ENCODE measurements at regions of chr9 and their contacts with region 1.

Region 1: DNA sequence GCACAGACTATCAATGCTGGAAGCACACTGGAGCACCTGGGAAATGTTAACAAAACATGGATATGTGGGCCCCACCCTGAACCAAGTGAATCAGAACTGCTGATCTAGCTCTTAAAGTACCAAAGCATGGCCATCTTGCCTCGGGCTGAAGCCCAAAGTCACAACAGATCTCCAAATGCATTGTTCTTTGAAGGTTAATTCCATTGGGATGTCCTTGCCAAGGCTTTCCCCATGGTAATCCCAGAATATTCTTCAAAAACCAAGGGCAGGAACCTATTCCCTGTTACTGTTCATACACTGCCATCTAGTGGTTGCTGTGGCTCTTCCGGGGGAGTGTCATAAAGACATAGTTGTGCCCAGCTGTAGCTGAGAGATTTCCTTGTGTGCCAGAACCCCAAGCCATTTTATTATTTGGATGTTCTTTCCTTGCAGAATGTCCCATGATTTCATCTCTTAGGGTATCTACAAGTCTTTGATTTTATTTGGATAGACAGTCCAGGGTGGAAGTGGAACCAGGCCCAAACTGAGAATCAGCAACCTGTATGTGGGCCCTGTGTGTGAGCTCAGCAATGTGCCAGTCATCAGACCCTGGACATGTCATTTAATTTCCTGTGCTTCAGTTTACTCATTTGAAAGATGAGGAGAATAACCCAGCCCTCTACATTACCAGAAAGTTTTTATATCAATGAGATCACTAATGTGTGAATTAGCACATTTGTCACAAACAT is 290.0 kb downstream of the ACTL7B start:
- DNase-seq: peak; percentile 75
- H3K4me3 ChIP-seq: no peak overlapping the region
- H3K27ac ChIP-seq: no peak overlapping the region
- H3K4me1 ChIP-seq: no peaks in the 10 kb centered on the region
- H3K27me3 ChIP-seq: no peaks in the 10 kb centered on the region
- CTCF ChIP-seq: peak; percentile 63 to 81
- POLR2A ChIP-seq: no peak

Region 2: DNA sequence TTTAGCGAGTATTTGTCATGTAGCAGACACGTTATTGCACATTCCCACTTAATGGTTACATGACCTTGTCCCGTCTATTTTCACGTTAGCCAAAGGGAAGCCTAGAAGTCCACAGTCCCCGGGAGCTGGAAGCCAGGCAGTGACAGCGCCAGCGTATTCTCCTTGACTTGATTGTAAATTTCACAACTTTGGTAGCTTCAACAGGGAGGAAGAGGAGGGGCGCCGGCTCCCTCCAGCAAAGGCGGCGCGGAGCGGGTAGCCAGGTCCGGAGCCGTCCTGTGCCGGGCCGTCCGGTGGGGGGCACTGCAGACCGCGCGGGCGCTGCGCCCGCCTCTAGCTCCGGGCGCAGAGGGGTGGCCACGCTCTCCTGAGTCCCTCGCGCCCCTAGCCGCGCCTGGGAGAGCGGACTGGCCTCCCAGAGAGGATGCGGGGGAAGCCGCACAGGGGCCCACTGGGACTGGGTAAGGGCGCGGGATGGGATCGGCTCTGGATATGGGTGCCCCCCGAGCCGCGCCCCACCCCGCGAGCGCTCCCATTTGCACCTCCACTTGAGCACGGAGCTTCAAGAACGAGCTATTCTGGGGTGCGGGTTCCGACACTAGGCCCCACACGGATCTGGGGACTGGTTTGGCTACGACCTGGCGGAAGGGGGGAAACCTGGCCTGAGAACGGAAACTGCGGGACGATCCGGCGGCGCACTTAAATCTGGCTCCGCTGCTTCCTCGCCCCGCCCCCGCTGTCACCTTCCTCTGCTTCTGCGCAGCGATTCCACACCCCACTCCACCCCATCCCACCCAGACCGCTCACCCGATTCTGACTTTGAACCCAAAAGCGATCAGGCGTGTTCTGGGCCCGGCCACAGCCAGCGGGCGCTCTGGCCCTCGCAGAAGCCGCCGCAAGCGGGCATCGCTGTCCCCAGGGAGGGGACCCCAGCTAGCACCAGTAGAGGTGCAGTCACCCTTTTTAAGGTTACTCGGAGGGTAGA is 1100.1 kb before region 1 on chr9:
- CTCF ChIA-PET with region 1: interaction called, 106 read pairs
- POLR2A ChIA-PET with region 1: no interaction called
- dilution Hi-C with region 1: no loop called
- intact Hi-C with region 1: loop called (anchors 1 kb)
- DNase-seq: peak; percentile 47
- H3K4me3 ChIP-seq: peak overlapping the region; percentile 32 to 57 (median 46)
- H3K27ac ChIP-seq: no peak overlapping the region
- H3K4me1 ChIP-seq: peaks cover 3% of the 10 kb centered on the region
- H3K27me3 ChIP-seq: peaks cover 0 to 3% of the 10 kb centered on the region in 2 experiments
- CTCF ChIP-seq: peak; percentile 86 to 88
- POLR2A ChIP-seq: no peak

Region 3: GRCh38 chr9:108108852-108109448 is 456.9 kb before region 1 on chr9:
- CTCF ChIA-PET with region 1: no interaction called
- POLR2A ChIA-PET with region 1: no interaction called
- dilution Hi-C with region 1: no loop called
- intact Hi-C with region 1: no loop called
- DNase-seq: no peak
- H3K4me3 ChIP-seq: no peak overlapping the region
- H3K27ac ChIP-seq: no peak overlapping the region
- H3K4me1 ChIP-seq: no peaks in the 10 kb centered on the region
- H3K27me3 ChIP-seq: no peaks in the 10 kb centered on the region
- CTCF ChIP-seq: no peak
- POLR2A ChIP-seq: no peak

Region 4: DNA sequence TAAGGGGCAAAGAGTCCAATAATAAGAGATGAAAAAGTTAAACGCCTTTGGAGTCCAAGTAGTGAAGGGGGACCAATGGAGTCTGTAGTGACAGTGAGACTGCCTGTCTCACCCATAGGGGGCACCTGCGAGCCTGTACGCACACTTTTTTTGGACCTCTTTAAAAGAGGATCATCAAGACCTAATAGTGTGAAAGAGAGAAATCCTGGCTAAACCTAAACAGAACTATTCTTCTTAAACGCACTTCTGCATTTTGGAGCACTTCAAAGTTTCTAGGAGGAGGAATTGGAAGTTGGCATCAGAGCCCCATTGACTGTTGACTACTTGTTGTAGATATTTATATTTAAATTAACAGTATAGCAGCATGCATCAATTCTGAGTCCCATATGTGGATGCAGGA is 440.2 kb before region 1 on chr9:
- CTCF ChIA-PET with region 1: no interaction called
- POLR2A ChIA-PET with region 1: no interaction called
- dilution Hi-C with region 1: no loop called
- intact Hi-C with region 1: loop called (anchors 1 kb)
- DNase-seq: no peak
- H3K4me3 ChIP-seq: no peak overlapping the region
- H3K27ac ChIP-seq: no peak overlapping the region
- H3K4me1 ChIP-seq: no peaks in the 10 kb centered on the region
- H3K27me3 ChIP-seq: no peaks in the 10 kb centered on the region
- CTCF ChIP-seq: peak; percentile 41 to 52
- POLR2A ChIP-seq: no peak

Region 5: GRCh38 chr9:108410161-108410560 is 155.7 kb before region 1 on chr9:
- CTCF ChIA-PET with region 1: interaction called, 11 read pairs
- POLR2A ChIA-PET with region 1: no interaction called
- dilution Hi-C with region 1: no loop called
- intact Hi-C with region 1: loop called (anchors 2 kb)
- DNase-seq: no peak
- H3K4me3 ChIP-seq: no peak overlapping the region
- H3K27ac ChIP-seq: no peak overlapping the region
- H3K4me1 ChIP-seq: no peaks in the 10 kb centered on the region
- H3K27me3 ChIP-seq: no peaks in the 10 kb centered on the region
- CTCF ChIP-seq: no peak
- POLR2A ChIP-seq: no peak

Region 6: DNA sequence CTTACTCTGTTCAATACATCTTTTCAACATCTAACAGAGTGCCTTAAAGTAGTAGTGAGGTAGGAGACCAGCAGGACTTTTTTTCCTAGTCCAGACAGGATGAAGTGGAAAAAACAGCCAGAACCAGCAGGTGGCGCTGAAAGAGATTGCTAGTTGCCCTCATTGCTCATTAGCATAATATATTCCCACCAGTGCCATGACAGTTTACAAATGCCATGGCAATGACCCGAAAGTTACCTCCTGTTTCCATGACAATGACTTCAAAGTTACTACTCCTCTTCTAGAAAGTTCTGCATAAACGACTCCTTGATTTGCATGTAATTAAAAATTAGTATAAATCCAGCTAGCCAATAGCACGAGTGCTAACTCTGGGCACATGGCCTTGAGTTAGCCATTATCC is 97.4 kb before region 1 on chr9:
- CTCF ChIA-PET with region 1: interaction called, 23 read pairs
- POLR2A ChIA-PET with region 1: no interaction called
- dilution Hi-C with region 1: no loop called
- intact Hi-C with region 1: loop called (anchors 1 kb)
- DNase-seq: peak; percentile 36
- H3K4me3 ChIP-seq: no peak overlapping the region
- H3K27ac ChIP-seq: no peak overlapping the region
- H3K4me1 ChIP-seq: peaks cover 9% of the 10 kb centered on the region
- H3K27me3 ChIP-seq: no peaks in the 10 kb centered on the region
- CTCF ChIP-seq: peak; percentile 62 to 63
- POLR2A ChIP-seq: no peak

Region 7: GRCh38 chr9:108511307-108511706 is 54.5 kb before region 1 on chr9:
- CTCF ChIA-PET with region 1: no interaction called
- POLR2A ChIA-PET with region 1: no interaction called
- dilution Hi-C with region 1: no loop called
- intact Hi-C with region 1: no loop called
- DNase-seq: no peak
- H3K4me3 ChIP-seq: no peak overlapping the region
- H3K27ac ChIP-seq: no peak overlapping the region
- H3K4me1 ChIP-seq: no peaks in the 10 kb centered on the region
- H3K27me3 ChIP-seq: no peaks in the 10 kb centered on the region
- CTCF ChIP-seq: no peak
- POLR2A ChIP-seq: no peak

Region 8: GRCh38 chr9:108813951-108814601 is 248.3 kb after region 1 on chr9:
- CTCF ChIA-PET with region 1: interaction called, 6 read pairs
- POLR2A ChIA-PET with region 1: no interaction called
- dilution Hi-C with region 1: no loop called
- intact Hi-C with region 1: loop called (anchors 5 kb)
- DNase-seq: peak; percentile 75
- H3K4me3 ChIP-seq: no peak overlapping the region
- H3K27ac ChIP-seq: no peak overlapping the region
- H3K4me1 ChIP-seq: peaks cover 4% of the 10 kb centered on the region
- H3K27me3 ChIP-seq: no peaks in the 10 kb centered on the region
- CTCF ChIP-seq: peak; percentile 38 to 64
- POLR2A ChIP-seq: no peak